Activated T-helper 2 cell treated with anti-CD3 and anti-CD28 coated beads, Interferon-gamma antibody, Interleukin-2, Interleukin-4, amounts not matched to agents 10 μg/mL and 5 μg/mL and 100 μg/mL, durations not matched to agents 14 hours and 24 hours and 36 hours (primary cell): ENCODE measurements at regions of chr7 and their contacts with region 1.

Region 1: DNA sequence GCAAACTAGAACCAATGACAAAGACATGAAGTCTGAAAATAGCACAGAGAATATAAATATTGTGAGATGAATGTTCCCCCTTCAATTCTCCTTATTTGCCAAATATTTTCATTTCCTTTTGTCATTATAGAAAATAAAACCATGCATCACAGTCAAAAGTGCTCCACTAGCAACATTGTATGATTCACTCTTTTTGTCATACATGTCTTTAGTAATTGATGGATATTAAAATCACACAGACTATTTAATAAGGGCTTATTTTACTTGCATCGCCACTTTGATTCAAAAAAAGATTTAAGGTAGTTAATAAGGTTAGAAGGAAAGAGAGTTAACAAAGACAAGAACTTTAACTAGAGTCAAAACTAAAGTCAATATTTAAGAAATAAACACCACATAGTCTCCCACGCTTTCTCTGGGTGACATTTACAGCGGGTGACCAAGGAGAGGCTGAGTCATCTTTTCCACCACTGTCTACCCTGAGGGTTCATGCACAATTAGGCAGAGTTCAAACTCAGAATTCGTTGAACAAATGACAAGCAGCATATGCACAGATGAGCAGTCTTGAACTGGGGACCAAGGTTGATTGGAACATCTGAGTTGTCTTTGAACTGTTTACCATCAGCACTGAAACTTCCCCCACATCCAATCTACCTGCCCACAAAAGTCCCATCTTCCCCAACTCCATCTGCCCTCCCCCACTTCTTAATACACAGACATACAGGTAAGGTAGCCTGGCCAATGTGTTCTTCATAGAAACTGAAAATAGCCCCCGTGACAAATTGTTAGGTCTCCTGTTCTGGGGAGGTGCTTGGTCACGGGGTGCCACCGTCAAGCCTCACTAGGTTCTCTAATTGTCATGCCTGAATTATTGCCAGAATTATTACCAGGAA is 42.5 kb downstream of the C7orf25 start:
- DNase-seq: peak; percentile 40
- H3K4me3 Mint-ChIP-seq: no peak overlapping the region
- H3K27ac Mint-ChIP-seq: peak overlapping the region; percentile 87
- H3K4me1 Mint-ChIP-seq: peaks cover 22% of the 10 kb centered on the region
- H3K27me3 Mint-ChIP-seq: no peaks in the 10 kb centered on the region

Region 2: DNA sequence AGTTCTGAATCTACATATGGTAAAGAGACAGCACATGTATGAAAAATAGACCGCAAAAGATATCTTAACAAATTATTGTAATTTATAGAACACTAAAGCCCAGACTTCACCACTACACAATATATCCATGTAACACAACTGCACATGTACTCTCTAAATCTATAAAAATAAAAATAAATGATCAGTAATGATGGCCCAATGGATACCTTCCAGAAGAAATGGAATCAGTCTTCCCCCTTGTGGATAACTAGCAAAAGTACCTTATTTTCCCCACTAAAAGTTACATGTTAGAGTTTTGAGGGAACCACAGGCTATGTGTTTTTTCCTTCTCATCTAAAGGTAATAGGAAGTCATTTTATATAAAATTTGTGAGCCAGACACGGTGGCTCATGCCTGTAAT is 16.8 kb after region 1 on chr7:
- intact Hi-C with region 1: loop called (anchors 1 kb)
- DNase-seq: no peak
- H3K4me3 Mint-ChIP-seq: no peak overlapping the region
- H3K27ac Mint-ChIP-seq: no peak overlapping the region
- H3K4me1 Mint-ChIP-seq: peaks cover 21% of the 10 kb centered on the region
- H3K27me3 Mint-ChIP-seq: peaks cover 4% of the 10 kb centered on the region

Region 3: DNA sequence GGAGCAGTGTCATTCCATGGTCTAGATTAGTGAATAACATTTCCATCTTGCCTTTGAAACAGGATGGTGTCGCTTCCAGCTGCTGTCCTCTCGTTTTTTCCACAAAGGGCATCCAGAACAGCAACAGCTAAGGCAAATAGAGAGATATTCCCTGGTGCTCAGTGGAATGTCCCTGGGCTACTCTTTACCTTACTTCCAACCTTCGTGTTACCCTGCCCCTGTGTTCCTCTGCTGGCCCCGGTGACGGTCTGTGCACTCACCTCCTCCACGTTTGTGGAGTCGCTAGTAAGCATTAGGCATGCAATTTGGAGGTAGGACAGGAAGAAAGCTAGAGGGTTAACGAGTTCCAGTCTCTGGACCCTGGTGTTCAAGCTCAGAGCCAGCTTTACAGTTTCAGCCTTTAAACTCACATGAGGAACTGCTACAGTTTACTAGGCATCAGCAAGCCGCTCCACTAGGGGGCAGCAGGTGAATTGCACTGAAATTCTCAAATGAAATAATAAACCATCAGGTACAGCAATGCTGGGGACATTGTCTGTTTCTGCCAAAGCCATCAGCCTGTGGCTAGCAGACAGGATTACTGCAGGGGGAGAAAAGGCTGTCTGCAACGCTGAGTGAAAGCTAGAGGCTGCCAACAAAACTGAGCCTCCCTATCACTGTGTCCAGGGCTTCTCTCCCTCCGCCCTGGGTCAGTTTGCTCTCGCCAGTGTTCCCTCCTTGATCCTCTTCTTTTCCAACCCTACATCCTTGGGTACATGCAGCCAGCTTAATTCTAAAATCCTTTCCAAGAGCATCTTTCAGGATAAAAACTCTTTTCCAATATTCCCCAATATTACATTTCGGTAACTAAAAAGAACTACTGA is 71.8 kb after region 1 on chr7:
- intact Hi-C with region 1: no loop called
- DNase-seq: peak; percentile 62
- H3K4me3 Mint-ChIP-seq: no peak overlapping the region
- H3K27ac Mint-ChIP-seq: no peak overlapping the region
- H3K4me1 Mint-ChIP-seq: peaks cover 21% of the 10 kb centered on the region
- H3K27me3 Mint-ChIP-seq: no peaks in the 10 kb centered on the region